Activated CD4-positive, alpha-beta T cell treated with anti-CD3 and anti-CD28 coated beads, Interleukin-2, amount 10 ng/mL, durations not matched to agents 24 days and 14 days (primary cell): ENCODE measurements at regions of chr17 and their contacts with region 1.

Region 1: GRCh38 chr17:75430159-75430974 is 24.9 kb upstream of the GRB2 start:
- DNase-seq: no peak
- H3K4me3 Mint-ChIP-seq: no peak overlapping the region
- H3K27ac Mint-ChIP-seq: no peak overlapping the region
- H3K4me1 Mint-ChIP-seq: peaks cover 18% of the 10 kb centered on the region
- H3K27me3 Mint-ChIP-seq: peaks cover 15% of the 10 kb centered on the region

Region 2: DNA sequence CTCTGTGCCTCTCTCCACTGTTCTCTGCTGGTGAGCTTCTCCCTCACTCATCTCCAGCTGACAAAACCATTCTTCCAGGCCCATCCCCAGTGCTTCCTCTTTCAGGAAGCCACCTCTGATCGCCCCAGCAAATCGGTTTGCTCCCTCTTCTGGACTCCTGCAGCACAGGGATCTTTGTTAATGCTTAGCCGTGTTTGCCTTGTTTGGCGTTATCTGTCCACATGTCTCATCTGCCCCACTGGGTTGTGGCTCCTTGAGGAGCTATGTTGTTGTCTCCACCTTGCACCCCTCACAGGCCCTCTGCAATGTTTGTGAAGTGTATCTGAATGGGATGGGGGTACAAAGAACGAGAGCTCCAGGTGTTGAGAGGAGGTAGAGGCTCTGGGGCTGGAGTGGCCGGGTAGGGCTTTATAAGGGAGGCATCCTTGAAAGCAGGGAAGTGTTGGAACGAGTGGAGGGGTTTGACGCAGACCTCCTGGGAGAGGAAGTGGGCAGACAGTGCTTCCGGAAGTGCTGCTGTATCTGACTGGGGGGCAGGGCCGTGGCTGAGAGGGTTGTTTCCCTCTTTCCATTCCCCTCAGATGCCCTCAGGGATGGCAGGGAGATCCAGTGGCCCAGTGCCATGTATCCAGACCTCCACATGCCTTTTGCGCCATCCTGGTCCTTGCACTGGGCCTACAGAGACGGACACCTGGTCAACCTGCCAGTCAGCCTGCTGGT is 57.1 kb after region 1 on chr17:
- intact Hi-C with region 1: loop called (anchors 5 kb)
- DNase-seq: peak; percentile 84
- H3K4me3 Mint-ChIP-seq: peak overlapping the region; percentile 75
- H3K27ac Mint-ChIP-seq: peak overlapping the region; percentile 92
- H3K4me1 Mint-ChIP-seq: peaks cover 19% of the 10 kb centered on the region
- H3K27me3 Mint-ChIP-seq: no peaks in the 10 kb centered on the region

Region 3: DNA sequence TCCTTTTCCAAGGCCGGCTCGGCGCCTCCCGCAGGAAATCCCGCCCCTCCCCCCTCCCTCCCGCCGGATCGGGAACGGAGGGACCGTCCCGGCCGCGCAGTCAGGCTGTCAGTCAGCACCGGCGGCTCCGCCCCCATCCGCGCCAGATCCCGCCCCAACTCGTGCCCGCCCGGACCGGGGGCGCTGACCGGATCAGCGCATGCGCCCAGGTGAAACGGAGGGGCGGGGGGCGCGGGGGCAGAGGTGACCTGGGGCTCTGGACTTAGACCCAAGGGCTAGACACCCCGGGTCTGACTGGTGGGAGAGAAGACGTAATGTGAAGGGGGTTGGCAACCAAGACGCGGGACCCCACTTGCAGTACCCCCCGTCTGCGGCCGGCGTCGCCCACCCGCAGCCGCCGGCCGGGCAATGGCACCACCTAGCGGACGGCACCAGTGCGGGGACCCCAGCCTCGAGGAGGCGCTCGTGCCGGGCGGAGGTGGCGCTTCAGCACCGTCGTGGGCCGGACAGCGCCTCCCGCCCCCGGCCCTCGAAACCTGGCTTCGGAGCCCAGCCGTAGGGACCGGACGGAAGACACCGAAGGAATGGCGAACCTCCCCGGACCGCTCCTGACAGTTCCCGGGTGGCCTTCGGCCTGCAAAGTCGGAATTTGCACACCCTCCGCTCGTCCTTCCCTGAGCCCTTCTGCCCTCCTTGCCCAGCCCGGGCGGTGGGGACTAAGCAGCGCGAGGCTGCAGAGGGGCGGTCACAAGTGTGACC is 85.3 kb after region 1 on chr17 and contains the start of gene CASKIN2:
- intact Hi-C with region 1: loop called (anchors 1 kb)
- DNase-seq: peak; percentile 93
- H3K4me3 Mint-ChIP-seq: peak within 1 kb of the TSS; percentile 82
- H3K27ac Mint-ChIP-seq: peak within 1 kb of the TSS; percentile 51
- H3K4me1 Mint-ChIP-seq: peaks cover 22% of the 10 kb centered on the region
- H3K27me3 Mint-ChIP-seq: peaks cover 7% of the 10 kb centered on the region
- total RNA-seq, gene CASKIN2: 1.4 and 1.6 TPM in 2 replicates

Region 4: GRCh38 chr17:75589012-75589918 is 158.9 kb after region 1 on chr17:
- intact Hi-C with region 1: loop called (anchors 1 kb)
- DNase-seq: peak; percentile 97
- H3K4me3 Mint-ChIP-seq: peak overlapping the region; percentile 80
- H3K27ac Mint-ChIP-seq: peak overlapping the region; percentile 66
- H3K4me1 Mint-ChIP-seq: peaks cover 2% of the 10 kb centered on the region
- H3K27me3 Mint-ChIP-seq: peaks cover 27% of the 10 kb centered on the region